ENCODE measurements at regions of chr12 and their contacts with region 1.

Region 1: DNA sequence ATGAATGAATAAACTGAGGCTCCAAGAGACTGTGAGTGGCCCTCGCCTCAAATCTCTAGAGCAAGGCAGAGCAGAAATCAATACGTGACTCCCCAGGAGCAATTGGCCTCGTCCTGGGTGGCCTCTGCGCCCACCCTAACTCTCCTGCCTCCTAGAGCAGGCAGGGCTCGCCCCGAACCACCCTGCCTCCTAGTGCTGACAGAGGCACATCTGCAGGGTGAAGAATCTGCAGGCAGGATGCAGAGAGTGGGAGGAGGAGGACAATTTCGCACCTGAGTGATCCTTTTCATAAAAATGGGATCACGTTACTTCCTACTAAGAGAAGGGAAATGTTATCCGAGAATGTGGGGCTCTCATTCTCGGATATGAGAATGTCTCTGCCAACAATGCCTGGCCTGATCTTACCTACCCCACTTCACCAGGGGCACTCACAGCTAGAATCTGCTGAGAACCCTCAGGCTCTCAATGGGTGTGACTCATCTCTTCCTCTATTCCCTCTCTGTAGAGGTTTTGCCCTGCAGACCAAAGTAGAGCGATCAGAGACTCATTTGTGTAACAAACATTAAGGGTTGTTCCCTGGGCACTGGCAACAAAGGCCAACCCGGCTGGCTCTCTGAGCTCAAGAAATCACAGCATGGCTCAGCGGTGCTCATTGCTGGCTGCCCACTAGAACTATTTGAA is 61.7 kb upstream of the BCL2L14 start:
- DNase-seq: peak; percentile 46 to 86 (median 56)
- H3K4me3 ChIP-seq: peak overlapping the region in 1 of 2 donors; percentile 12
- H3K4me3 Mint-ChIP-seq: peak overlapping the region; percentile 66 to 89 (median 80)
- H3K27ac ChIP-seq: peak overlapping the region; percentile 75
- H3K27ac Mint-ChIP-seq: peak overlapping the region; percentile 95 to 99 (median 97)
- H3K4me1 ChIP-seq: peaks cover 61% of the 10 kb centered on the region
- H3K4me1 Mint-ChIP-seq: peaks cover 65 to 92% (median 85%) of the 10 kb centered on the region in 4 donors
- H3K27me3 ChIP-seq: no peaks in the 10 kb centered on the region
- H3K27me3 Mint-ChIP-seq: no peaks in the 10 kb centered on the region

Region 2: DNA sequence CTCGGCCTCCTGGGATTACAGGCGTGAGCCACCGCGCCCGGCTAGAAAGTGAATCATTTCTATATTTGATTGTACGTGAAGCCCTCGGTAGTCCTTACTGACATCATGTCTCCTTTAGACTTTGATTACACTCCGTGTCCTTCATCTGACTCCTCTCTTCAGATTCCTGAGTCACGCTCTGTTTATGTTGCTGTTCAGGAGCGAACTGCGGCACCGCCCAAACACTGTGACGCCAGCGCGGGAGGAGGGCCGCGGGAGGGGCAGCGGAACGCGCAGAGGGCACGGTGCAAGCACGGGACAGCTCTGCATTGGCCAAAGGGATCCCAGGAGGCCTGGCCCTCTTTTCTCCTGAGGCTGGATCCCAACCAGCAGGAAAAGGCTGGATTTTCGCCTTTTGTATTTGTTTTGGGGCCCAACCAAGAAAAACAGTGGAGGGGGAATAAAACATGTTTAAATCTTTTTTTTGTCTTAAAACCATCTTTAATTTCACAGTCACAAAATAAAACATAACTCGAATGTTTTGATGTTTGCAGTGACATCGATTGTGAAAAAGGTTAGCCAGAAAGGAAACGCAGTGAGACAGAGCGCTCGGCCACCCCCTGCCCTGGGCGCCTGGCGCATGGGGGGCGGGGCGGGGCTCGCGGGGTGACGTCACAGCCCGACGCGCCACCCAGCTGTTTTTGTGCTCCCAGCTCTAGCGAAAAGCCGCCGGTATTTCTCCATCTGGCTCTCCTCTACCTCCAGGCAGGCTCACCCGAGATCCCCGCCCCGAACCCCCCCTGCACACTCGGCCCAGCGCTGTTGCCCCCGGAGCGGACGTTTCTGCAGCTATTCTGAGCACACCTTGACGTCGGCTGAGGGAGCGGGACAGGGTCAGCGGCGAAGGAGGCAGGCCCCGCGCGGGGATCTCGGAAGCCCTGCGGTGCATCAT is 1796.6 kb before region 1 on chr12 and contains the start of gene GABARAPL1:
- CTCF ChIA-PET with region 1: no interaction called
- POLR2A ChIA-PET with region 1: no interaction called
- intact Hi-C with region 1: loop called (anchors 5 kb)
- DNase-seq: peak; percentile 84 to 94 (median 88)
- H3K4me3 ChIP-seq: peak within 1 kb of the TSS; percentile 57 to 69
- H3K4me3 Mint-ChIP-seq: peak within 1 kb of the TSS; percentile 88 to 98 (median 94)
- H3K27ac ChIP-seq: peak within 1 kb of the TSS; percentile 81
- H3K27ac Mint-ChIP-seq: peak within 1 kb of the TSS; percentile 92 to 99 (median 96)
- H3K4me1 ChIP-seq: peaks cover 32% of the 10 kb centered on the region
- H3K4me1 Mint-ChIP-seq: peaks cover 19 to 44% (median 25%) of the 10 kb centered on the region in 4 donors
- H3K27me3 ChIP-seq: no peaks in the 10 kb centered on the region
- H3K27me3 Mint-ChIP-seq: no peaks in the 10 kb centered on the region
- total RNA-seq, gene GABARAPL1: 35.3 to 36.3 TPM

Region 3: DNA sequence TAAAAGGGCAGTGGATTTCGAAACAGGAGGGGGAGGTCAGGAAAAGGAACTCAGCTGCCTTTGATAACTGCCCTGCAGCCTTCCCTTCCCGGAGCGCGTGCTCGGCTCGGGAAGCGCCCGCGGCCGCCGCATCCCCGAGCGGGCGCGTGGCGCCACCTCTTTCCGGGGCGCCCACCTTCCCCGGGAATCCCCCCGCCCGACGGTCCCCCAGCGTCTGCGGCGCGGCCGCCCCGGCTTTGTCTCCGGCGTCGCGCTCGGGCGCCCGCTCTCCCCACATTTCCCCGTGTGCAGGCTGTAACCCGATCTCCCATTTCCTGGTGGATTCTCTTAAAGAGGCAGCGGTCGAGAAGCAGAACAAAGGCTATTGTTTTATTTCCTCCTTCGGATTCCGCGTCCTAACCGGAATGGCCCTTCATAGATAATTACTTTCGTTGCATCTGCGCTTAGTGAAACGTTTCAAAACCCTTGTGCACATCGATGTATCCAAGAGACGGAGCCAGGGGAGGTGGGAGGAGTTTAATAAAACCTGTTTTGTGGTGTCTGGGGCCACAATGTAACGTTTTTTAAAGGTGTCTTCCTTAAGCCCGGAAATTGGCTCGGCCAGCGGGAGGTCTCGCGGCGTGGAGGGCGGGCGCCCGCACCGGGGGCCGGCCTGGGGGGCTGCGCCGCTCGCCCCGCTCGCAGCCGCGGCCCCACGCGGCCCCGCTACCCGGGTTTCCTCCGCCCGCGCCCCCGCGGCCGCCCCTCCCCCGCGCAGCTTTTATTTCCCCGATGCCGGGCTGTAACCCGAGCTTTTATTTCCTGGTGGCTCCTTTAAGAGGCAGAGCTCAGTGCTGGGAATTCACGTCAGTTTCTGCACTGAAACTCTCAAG is 360.0 kb before region 1 on chr12 and contains the start of gene ETV6:
- CTCF ChIA-PET with region 1: no interaction called
- POLR2A ChIA-PET with region 1: interaction called, 44 read pairs
- intact Hi-C with region 1: loop called (anchors 1 kb)
- DNase-seq: peak; percentile 79 to 84 (median 81)
- H3K4me3 ChIP-seq: peak within 1 kb of the TSS; percentile 59 to 97
- H3K4me3 Mint-ChIP-seq: peak within 1 kb of the TSS; percentile 95 to 99 (median 98)
- H3K27ac ChIP-seq: peak within 1 kb of the TSS; percentile 79
- H3K27ac Mint-ChIP-seq: peak within 1 kb of the TSS; percentile 85 to 99 (median 98)
- H3K4me1 ChIP-seq: peaks cover 32% of the 10 kb centered on the region
- H3K4me1 Mint-ChIP-seq: peaks cover 24 to 48% (median 27%) of the 10 kb centered on the region in 4 donors
- H3K27me3 ChIP-seq: no peaks in the 10 kb centered on the region
- H3K27me3 Mint-ChIP-seq: no peaks in the 10 kb centered on the region
- total RNA-seq, gene ETV6: 41.3 to 43.9 TPM

Region 4: DNA sequence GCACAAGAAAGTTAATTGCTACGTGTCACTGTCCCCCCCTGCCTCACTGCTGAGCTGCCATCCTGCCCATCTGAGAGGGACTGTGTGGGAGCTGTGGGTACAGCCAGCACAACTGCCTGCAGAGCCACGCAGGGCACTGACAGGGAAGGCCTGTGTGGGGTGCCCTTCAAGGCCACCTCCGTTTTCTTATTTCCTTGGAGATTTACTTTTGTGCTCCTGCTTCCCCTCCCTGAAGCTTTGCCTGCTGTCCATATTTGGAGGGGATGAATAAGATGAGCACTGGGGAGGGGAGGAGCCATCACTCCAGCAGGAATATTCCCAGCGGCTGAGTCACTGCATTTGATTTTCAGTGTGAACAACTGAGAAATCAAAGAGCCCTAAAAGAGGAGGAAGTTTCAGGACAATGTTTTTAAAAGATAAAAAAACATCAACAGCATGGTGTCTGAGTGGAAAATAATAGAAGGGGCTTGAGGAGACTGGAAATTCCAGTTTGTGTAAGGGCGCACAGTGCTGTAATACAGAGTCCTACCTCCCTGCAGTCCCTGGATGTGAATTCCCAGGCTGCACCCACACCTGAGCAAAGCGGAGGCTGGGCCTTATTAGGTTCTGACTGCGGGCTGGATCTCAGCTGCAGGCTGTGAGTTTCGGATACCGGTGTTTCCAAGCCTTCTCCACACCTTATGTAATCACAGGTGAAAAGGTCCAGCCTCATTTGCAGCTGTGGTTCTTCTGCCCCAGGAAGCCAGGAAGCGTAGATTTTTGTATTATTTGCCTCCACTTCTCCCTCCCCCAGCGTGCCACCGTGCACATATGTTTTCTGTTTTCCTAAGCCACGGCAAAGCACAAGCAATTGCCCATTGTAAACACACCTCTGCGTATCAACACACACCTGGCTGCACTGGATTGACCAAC is 130.9 kb before region 1 on chr12:
- CTCF ChIA-PET with region 1: no interaction called
- POLR2A ChIA-PET with region 1: interaction called, 7 read pairs
- intact Hi-C with region 1: loop called (anchors 10 kb)
- DNase-seq: no peak
- H3K4me3 ChIP-seq: no peak overlapping the region
- H3K4me3 Mint-ChIP-seq: no peak overlapping the region
- H3K27ac ChIP-seq: no peak overlapping the region
- H3K27ac Mint-ChIP-seq: peak overlapping the region in 3 of 7 donors; percentile 37 to 74 (median 56)
- H3K4me1 ChIP-seq: peaks cover 30% of the 10 kb centered on the region
- H3K4me1 Mint-ChIP-seq: peaks cover 21 to 44% (median 33%) of the 10 kb centered on the region in 4 donors
- H3K27me3 ChIP-seq: no peaks in the 10 kb centered on the region
- H3K27me3 Mint-ChIP-seq: no peaks in the 10 kb centered on the region

Region 5: DNA sequence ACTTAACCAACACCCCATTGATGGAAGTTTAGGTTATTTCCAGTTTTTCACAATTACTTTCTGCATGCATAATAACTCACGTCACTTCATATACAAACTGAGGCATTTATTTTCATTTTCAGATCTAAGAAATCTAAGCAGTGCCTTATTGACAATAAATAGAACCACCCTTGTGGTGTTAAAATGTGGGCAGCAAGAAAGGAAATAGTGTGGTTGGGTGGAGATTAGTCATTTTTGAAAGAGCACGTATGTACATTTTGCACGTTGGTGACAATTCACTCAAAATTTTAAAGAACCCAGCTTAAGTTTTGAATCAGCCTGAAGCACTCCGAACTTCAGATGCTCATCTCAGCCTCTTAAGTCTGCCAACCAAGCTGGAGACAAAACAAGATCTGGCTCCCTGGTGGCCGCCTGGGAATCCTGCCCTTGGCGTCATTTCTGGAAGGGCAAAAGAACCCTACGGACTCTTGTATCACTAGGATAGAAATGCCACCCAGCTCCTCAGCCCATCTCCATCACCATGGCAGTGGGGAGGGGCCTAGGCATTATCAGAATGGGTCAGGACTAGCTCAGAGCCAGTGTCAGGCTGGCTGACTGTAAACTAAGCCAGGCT is 27.8 kb before region 1 on chr12:
- CTCF ChIA-PET with region 1: interaction called, 50 read pairs
- POLR2A ChIA-PET with region 1: interaction called, 41 read pairs
- intact Hi-C with region 1: loop called (anchors 1 kb)
- DNase-seq: peak; percentile 86 to 94 (median 88)
- H3K4me3 ChIP-seq: peak overlapping the region; percentile 4 to 29
- H3K4me3 Mint-ChIP-seq: peak overlapping the region; percentile 2 to 74 (median 70)
- H3K27ac ChIP-seq: peak overlapping the region; percentile 74
- H3K27ac Mint-ChIP-seq: peak overlapping the region; percentile 88 to 99 (median 97)
- H3K4me1 ChIP-seq: peaks cover 59% of the 10 kb centered on the region
- H3K4me1 Mint-ChIP-seq: peaks cover 47 to 61% (median 57%) of the 10 kb centered on the region in 4 donors
- H3K27me3 ChIP-seq: no peaks in the 10 kb centered on the region
- H3K27me3 Mint-ChIP-seq: no peaks in the 10 kb centered on the region

Region 6: DNA sequence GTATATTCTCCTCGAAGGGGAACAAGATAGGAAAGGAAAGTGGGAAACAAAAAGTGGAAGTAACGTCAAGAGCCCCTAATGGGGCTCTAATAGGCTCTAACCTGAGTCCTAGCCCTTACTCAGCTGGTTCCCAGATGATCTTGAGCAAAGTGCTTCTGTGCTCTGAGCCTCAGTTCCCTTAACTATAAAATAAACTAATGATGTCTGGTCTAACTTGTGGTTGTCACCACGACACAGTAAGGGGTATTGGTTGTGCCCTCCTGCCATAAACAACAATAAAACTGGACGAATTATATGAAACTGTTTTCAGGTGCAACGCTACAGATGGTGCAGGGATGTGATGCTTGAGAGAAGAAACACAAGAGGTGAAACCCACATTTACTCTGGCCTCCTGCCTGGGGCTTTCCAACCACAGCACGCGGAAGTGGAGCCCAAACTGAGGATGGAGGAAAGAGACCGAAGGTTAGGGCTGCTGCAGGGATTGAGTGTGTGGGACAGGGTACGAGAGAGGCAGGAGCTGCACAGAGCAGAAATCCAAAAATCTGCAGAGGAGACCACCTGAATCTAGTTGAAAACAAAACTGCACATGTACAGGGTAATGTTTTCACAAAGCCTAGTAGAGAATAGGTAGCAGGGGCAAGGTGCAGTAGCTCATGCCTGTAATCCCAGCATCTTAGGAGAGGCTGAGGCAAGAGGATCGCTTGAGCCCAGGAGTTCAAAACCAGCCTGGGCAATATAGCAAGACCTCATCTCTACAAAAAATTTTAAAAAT is 16.0 kb after region 1 on chr12:
- CTCF ChIA-PET with region 1: interaction called, 87 read pairs
- POLR2A ChIA-PET with region 1: interaction called, 36 read pairs
- intact Hi-C with region 1: loop called (anchors 2 kb)
- DNase-seq: peak; percentile 55 to 71 (median 62)
- H3K4me3 ChIP-seq: no peak overlapping the region
- H3K4me3 Mint-ChIP-seq: peak overlapping the region; percentile 62 to 85 (median 72)
- H3K27ac ChIP-seq: peak overlapping the region; percentile 34
- H3K27ac Mint-ChIP-seq: peak overlapping the region; percentile 72 to 94 (median 90)
- H3K4me1 ChIP-seq: peaks cover 33% of the 10 kb centered on the region
- H3K4me1 Mint-ChIP-seq: peaks cover 42 to 43% (median 43%) of the 10 kb centered on the region in 4 donors
- H3K27me3 ChIP-seq: no peaks in the 10 kb centered on the region
- H3K27me3 Mint-ChIP-seq: no peaks in the 10 kb centered on the region